CD4-positive, alpha-beta T cell (primary cell): ENCODE measurements at regions of chr20 and their contacts with region 1.

Region 1: DNA sequence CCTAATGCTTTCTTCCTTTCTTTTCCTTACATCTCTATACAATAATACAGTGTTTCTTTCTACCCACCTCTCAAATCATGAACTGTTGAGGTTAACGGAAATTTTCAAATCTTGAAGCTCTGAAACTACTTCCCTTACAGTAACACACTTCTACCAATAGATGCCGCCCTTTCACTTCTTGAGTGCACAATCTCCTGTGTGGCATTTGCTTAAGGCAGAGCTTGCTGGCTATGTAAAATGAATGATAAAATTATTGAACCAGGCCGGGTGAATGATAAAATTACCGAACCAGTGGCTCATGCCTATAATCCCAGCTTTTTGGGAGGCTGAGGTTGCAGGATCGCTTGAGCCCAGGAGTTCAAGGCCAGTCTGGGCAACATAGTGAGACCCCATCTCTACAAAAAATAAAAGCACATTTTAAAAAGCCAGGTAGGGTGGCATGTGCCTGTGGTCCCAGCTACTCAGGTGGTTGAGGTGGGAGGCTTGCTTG is 56.8 kb downstream of the KCNS1 start:
- DNase-seq: peak in 10 of 14 experiments; percentile 16 to 82 (median 30)
- ATAC-seq: peak; percentile 94
- H3K4me3 ChIP-seq: no peak overlapping the region
- H3K4me3 Mint-ChIP-seq: no peak overlapping the region
- H3K27ac ChIP-seq: peak overlapping the region in 1 of 2 donors; percentile 21
- H3K27ac Mint-ChIP-seq: peak overlapping the region; percentile 66
- H3K4me1 ChIP-seq: peaks cover 13% of the 10 kb centered on the region
- H3K4me1 Mint-ChIP-seq: peaks cover 81% of the 10 kb centered on the region
- H3K27me3 ChIP-seq: no peaks in the 10 kb centered on the region
- H3K27me3 Mint-ChIP-seq: no peaks in the 10 kb centered on the region
- CTCF ChIP-seq: peak; percentile 89

Region 2: DNA sequence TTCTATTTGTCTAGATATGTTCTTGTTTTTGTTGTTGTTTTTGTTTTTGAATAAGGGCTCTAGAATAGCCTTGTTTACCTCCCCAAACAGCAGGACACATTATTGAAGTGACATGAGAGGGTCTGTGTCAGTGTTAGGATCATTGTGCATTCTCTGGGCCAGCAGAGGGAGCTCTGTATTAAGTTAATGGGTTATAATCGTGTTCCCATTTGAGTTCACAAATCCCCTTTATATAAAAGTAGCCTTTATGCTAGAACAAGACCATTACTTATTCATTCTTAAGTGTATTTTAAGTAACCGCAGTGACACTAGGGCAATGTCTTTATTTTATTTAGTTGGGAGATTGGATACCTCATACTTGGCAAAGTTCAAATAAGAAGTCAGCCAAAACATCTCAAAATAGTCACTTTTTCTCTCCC is 33.0 kb before region 1 on chr20:
- CTCF ChIA-PET with region 1: interaction called, 22 read pairs
- POLR2A ChIA-PET with region 1: no interaction called
- intact Hi-C with region 1: no loop called
- DNase-seq: peak in 13 of 14 experiments; percentile 18 to 73 (median 44)
- ATAC-seq: peak; percentile 75
- H3K4me3 ChIP-seq: no peak overlapping the region
- H3K4me3 Mint-ChIP-seq: peak overlapping the region; percentile 0
- H3K27ac ChIP-seq: no peak overlapping the region
- H3K27ac Mint-ChIP-seq: peak overlapping the region; percentile 16
- H3K4me1 ChIP-seq: peaks cover 9% of the 10 kb centered on the region
- H3K4me1 Mint-ChIP-seq: peaks cover 70% of the 10 kb centered on the region
- H3K27me3 ChIP-seq: no peaks in the 10 kb centered on the region
- H3K27me3 Mint-ChIP-seq: no peaks in the 10 kb centered on the region
- CTCF ChIP-seq: peak; percentile 81

Region 3: GRCh38 chr20:45028424-45029136 is 15.5 kb before region 1 on chr20:
- CTCF ChIA-PET with region 1: interaction called, 11 read pairs
- POLR2A ChIA-PET with region 1: interaction called, 7 read pairs
- intact Hi-C with region 1: no loop called
- DNase-seq: no peak
- ATAC-seq: no peak
- H3K4me3 ChIP-seq: no peak overlapping the region
- H3K4me3 Mint-ChIP-seq: peak overlapping the region; percentile 27
- H3K27ac ChIP-seq: no peak overlapping the region
- H3K27ac Mint-ChIP-seq: peak overlapping the region; percentile 74
- H3K4me1 ChIP-seq: peaks cover 22% of the 10 kb centered on the region
- H3K4me1 Mint-ChIP-seq: peaks cover 74% of the 10 kb centered on the region
- H3K27me3 ChIP-seq: no peaks in the 10 kb centered on the region
- H3K27me3 Mint-ChIP-seq: no peaks in the 10 kb centered on the region
- CTCF ChIP-seq: no peak

Region 4: DNA sequence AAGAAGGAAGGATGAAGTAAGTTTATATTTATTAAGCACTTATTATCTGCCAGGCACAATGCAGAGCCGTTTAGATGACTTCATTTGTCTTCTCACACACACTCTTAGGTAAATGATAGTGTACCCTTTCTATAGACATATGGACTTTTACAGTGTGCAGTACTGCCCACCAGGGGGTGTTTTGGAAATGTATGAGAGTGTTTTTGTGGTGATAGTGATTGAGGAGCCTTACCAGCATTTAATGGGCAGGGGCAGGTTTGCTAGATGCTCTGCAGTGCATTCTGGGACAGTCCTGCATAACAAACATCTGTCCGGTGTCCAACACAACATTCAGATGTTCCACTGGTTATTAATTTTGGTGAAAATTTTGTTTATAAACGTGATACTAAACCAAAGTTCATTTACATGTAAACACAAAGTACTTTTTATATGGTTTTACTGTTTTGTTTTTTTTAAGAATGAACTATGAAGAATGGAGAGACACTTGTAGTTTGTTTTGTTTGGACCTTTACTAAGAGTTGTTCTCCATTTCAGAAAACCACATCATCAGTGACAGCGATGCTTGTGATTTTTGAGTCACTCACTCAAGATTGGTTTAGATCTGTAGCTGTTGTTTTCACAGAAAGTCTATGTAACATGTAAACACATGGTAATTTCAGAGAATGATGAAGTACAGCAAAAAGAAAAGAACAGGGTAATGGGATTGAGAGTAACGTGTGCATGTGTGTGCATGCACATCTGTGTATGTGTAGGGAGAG is 36.9 kb after region 1 on chr20:
- CTCF ChIA-PET with region 1: interaction called, 10 read pairs
- POLR2A ChIA-PET with region 1: no interaction called
- intact Hi-C with region 1: no loop called
- DNase-seq: peak in 1 of 14 experiments; percentile 14
- ATAC-seq: peak; percentile 56
- H3K4me3 ChIP-seq: no peak overlapping the region
- H3K4me3 Mint-ChIP-seq: no peak overlapping the region
- H3K27ac ChIP-seq: no peak overlapping the region
- H3K27ac Mint-ChIP-seq: no peak overlapping the region
- H3K4me1 ChIP-seq: no peaks in the 10 kb centered on the region
- H3K4me1 Mint-ChIP-seq: peaks cover 8% of the 10 kb centered on the region
- H3K27me3 ChIP-seq: no peaks in the 10 kb centered on the region
- H3K27me3 Mint-ChIP-seq: no peaks in the 10 kb centered on the region
- CTCF ChIP-seq: no peak

Region 5: GRCh38 chr20:45293041-45294002 is 249.2 kb after region 1 on chr20:
- CTCF ChIA-PET with region 1: interaction called, 4 read pairs
- POLR2A ChIA-PET with region 1: interaction called, 3 read pairs
- intact Hi-C with region 1: loop called (anchors 2 kb)
- DNase-seq: peak; percentile 63 to 84 (median 74)
- ATAC-seq: peak; percentile 92
- H3K4me3 ChIP-seq: peak overlapping the region; percentile 40
- H3K4me3 Mint-ChIP-seq: peak overlapping the region; percentile 82
- H3K27ac ChIP-seq: no peak overlapping the region
- H3K27ac Mint-ChIP-seq: no peak overlapping the region
- H3K4me1 ChIP-seq: peaks cover 17% of the 10 kb centered on the region
- H3K4me1 Mint-ChIP-seq: no peaks in the 10 kb centered on the region
- H3K27me3 ChIP-seq: peaks cover 15 to 23% of the 10 kb centered on the region in 2 experiments
- H3K27me3 Mint-ChIP-seq: peaks cover 66% of the 10 kb centered on the region
- CTCF ChIP-seq: peak; percentile 95